ENCODE measurements at regions of chr10 and their contacts with region 1.

Region 1: DNA sequence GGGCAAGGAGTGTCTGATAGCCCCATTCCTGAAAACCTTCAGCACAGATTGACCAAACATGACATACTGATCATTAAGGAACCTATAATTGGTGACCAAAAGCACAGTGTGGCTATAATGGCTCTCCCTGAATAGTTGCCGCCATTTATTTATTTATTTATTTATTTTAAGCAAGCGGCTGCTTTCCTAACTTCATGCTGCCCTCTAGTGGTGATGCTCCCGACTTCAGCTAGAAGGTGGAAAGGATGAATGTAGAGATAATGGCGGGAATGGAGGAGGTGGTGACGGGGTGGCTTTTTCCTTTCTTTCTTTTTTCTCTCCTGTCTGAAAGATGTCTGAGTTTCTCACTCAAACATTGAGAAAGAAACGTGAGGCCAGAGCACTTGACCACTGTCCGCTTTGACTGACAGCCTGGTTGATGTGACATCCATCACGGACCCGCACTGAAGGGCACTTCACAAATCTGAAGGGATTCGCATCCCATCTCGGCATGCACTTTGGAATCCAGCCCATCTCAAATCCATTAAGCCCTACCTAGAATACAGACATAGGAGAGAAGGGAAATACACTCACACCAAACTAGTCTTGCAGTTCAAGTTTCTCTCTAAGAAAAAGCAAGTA is 1090.1 kb downstream of the KCNMA1 start:
- DNase-seq: peak in 1 of 2 donors; percentile 91
- H3K4me3 ChIP-seq: peak overlapping the region in 1 of 2 donors; percentile 42
- H3K27ac ChIP-seq: no peak overlapping the region
- H3K4me1 ChIP-seq: peaks cover 0 to 3% of the 10 kb centered on the region in 2 donors
- H3K27me3 ChIP-seq: no peaks in the 10 kb centered on the region
- CTCF ChIP-seq: peak; percentile 81 to 92 (median 84)

Region 2: GRCh38 chr10:75922435-75922834 is 625.0 kb before region 1 on chr10:
- intact Hi-C with region 1: loop called (anchors 10 kb)
- DNase-seq: no peak
- H3K4me3 ChIP-seq: no peak overlapping the region
- H3K27ac ChIP-seq: no peak overlapping the region
- H3K4me1 ChIP-seq: no peaks in the 10 kb centered on the region
- H3K27me3 ChIP-seq: no peaks in the 10 kb centered on the region
- CTCF ChIP-seq: peak in 1 of 3 experiments; percentile 30

Region 3: GRCh38 chr10:76311752-76312636 is 235.5 kb before region 1 on chr10:
- intact Hi-C with region 1: loop called (anchors 5 kb)
- DNase-seq: no peak
- H3K4me3 ChIP-seq: no peak overlapping the region
- H3K27ac ChIP-seq: peak overlapping the region; percentile 72
- H3K4me1 ChIP-seq: peaks cover 5 to 30% of the 10 kb centered on the region in 2 donors
- H3K27me3 ChIP-seq: no peaks in the 10 kb centered on the region
- CTCF ChIP-seq: peak in 2 of 3 experiments; percentile 22 to 30

Region 4: DNA sequence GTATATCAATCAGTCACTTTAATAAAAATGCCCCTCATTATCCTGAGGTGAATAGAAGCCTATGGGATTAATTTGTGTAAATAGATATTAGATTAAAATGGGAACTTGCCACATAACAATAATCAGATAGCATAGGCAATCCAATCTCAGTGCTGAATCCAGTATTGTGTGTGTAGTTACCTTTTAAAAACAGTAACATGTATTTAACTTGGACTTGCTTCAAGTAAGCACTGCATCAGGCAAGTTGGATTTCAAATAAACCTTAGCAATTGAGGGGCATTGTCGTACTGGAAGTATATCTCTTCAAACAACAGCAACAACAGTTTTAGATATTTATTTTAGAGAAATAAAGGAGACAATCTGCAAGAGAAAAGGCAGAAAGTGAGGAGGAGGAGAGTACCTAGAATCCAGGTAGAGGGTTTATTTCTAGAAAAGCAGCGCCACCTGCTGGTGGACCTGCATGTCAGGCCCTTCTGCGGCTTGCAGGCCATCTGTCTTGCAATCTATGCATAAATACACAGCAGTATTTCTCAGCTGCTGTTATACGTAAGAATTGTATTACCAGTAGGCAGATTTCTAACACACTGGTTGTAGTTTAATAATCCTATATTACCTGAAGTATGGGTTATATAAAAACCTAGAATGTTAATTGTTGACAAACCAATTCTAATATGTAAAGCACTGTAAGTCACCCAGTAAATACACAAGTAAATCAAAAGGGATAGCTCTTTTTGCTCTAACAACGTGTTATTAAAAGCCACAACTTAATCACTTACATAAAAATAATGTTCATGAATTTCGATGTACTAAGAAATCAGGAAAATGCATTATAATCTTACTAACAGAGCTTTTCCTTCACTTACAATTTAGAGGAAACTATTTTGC is 437.3 kb after region 1 on chr10:
- intact Hi-C with region 1: loop called (anchors 5 kb)
- DNase-seq: peak in 1 of 2 donors; percentile 72
- H3K4me3 ChIP-seq: no peak overlapping the region
- H3K27ac ChIP-seq: no peak overlapping the region
- H3K4me1 ChIP-seq: peaks cover 0 to 2% of the 10 kb centered on the region in 2 donors
- H3K27me3 ChIP-seq: no peaks in the 10 kb centered on the region
- CTCF ChIP-seq: peak; percentile 61 to 91 (median 79)